ENCODE measurements at regions of chr1 and their contacts with region 1.

Region 1: GRCh38 chr1:66331657-66332547 is 202.1 kb upstream of the SGIP1 start:
- DNase-seq: peak; percentile 75
- H3K4me3 Mint-ChIP-seq: peak overlapping the region; percentile 93
- H3K27ac Mint-ChIP-seq: peak overlapping the region; percentile 96
- H3K4me1 Mint-ChIP-seq: peaks cover 48% of the 10 kb centered on the region
- H3K27me3 Mint-ChIP-seq: no peaks in the 10 kb centered on the region

Region 2: DNA sequence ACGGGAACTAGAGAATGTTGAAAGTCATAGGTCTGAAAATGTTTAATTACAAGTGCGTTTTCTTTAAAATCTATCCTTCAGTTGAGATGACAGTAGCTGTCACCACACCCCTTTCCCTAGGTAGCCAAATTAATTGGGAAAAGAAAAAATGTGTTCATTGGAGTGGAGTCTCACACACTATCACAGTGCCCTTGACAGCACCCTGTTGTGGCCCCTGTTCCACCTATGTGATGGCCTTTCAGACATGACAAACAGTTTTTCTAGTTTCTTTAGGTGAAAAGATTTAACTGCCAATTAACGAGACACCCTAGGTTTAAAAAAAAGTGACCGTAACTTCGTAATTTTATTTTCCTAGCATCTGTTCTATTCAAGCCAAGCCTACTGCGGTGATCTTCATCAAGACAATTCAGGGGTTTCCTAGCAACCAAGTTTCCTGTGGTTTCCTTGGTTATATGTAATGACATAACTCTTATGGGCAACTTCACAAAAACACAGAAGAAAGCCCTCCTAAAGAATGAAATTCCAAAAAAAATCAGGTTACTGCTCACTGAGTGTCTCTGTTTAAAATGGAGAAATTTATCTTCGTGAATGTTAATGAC is 240.9 kb before region 1 on chr1:
- CTCF ChIA-PET with region 1: no interaction called
- POLR2A ChIA-PET with region 1: no interaction called
- intact Hi-C with region 1: no loop called
- DNase-seq: no peak
- H3K4me3 Mint-ChIP-seq: no peak overlapping the region
- H3K27ac Mint-ChIP-seq: no peak overlapping the region
- H3K4me1 Mint-ChIP-seq: peaks cover 2% of the 10 kb centered on the region
- H3K27me3 Mint-ChIP-seq: no peaks in the 10 kb centered on the region

Region 3: DNA sequence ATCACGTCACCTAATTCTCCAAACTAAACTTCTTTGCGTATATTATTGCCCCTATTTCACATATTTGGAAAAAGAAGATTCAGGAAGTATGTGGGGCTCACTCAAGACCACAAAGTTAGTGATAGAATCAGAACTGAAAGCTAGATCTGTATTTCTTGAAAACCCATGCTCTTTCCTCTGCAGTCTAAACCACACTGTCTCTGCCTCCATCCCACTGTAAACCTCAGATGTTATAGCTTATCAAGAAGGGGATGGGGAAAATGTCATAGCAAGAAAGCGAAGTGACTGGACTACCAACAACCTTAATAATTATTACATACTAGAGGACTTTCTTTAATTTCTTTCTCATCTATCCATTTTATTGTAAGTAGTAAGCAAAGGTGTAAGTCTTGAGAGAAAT is 55.7 kb before region 1 on chr1:
- CTCF ChIA-PET with region 1: interaction called, 5 read pairs
- POLR2A ChIA-PET with region 1: interaction called, 28 read pairs
- intact Hi-C with region 1: no loop called
- DNase-seq: peak; percentile 44
- H3K4me3 Mint-ChIP-seq: peak overlapping the region; percentile 49
- H3K27ac Mint-ChIP-seq: peak overlapping the region; percentile 65
- H3K4me1 Mint-ChIP-seq: peaks cover 87% of the 10 kb centered on the region
- H3K27me3 Mint-ChIP-seq: no peaks in the 10 kb centered on the region

Region 4: GRCh38 chr1:66300972-66301451 is 30.9 kb before region 1 on chr1:
- CTCF ChIA-PET with region 1: interaction called, 12 read pairs
- POLR2A ChIA-PET with region 1: interaction called, 4 read pairs
- intact Hi-C with region 1: loop called (anchors 1 kb)
- DNase-seq: peak; percentile 60
- H3K4me3 Mint-ChIP-seq: peak overlapping the region; percentile 65
- H3K27ac Mint-ChIP-seq: peak overlapping the region; percentile 77
- H3K4me1 Mint-ChIP-seq: peaks cover 50% of the 10 kb centered on the region
- H3K27me3 Mint-ChIP-seq: no peaks in the 10 kb centered on the region

Region 5: DNA sequence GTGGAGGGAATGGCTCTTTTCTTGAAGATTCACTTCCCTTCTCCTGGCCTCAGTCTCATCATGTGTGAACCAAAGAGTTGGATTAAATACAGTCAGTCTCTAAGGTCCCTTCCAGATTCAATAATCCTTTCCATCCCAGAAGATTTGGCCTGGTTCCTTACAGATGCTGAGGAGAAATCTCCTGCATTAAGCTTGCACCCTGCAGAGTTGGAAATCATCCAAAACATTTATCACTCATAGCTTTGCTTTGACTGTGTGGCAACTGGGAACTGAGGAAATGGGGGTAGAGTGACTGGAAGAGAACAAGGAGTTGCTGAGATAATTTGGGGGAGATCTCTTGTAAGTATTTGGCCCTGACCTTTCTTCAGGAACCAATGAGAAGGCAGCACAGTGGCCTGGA is 18.5 kb before region 1 on chr1:
- CTCF ChIA-PET with region 1: no interaction called
- POLR2A ChIA-PET with region 1: no interaction called
- intact Hi-C with region 1: no loop called
- DNase-seq: no peak
- H3K4me3 Mint-ChIP-seq: no peak overlapping the region
- H3K27ac Mint-ChIP-seq: no peak overlapping the region
- H3K4me1 Mint-ChIP-seq: no peaks in the 10 kb centered on the region
- H3K27me3 Mint-ChIP-seq: no peaks in the 10 kb centered on the region

Region 6: DNA sequence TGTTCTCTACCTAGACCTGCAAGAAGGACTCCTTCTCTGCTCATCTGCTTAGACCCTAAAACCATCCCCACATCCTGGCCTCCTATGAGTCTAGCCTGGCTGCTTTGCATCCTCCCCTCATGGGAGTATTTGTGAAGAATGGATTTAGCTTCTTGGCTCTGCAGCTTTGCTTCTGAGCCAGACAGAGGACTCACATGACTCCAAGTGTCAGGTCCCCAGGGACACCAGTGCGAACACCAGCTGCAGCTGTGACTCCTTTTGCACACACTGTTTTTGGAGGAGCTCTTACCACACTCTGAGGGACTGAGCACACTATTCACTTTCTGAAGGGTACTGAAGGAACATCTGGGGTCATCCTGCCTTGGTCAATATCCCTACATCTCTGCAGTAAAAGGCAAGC is 70.3 kb after region 1 on chr1:
- CTCF ChIA-PET with region 1: no interaction called
- POLR2A ChIA-PET with region 1: no interaction called
- intact Hi-C with region 1: loop called (anchors 1 kb)
- DNase-seq: no peak
- H3K4me3 Mint-ChIP-seq: no peak overlapping the region
- H3K27ac Mint-ChIP-seq: no peak overlapping the region
- H3K4me1 Mint-ChIP-seq: peaks cover 31% of the 10 kb centered on the region
- H3K27me3 Mint-ChIP-seq: no peaks in the 10 kb centered on the region

Region 7: GRCh38 chr1:66598670-66599069 is 266.8 kb after region 1 on chr1:
- CTCF ChIA-PET with region 1: no interaction called
- POLR2A ChIA-PET with region 1: no interaction called
- intact Hi-C with region 1: no loop called
- DNase-seq: no peak
- H3K4me3 Mint-ChIP-seq: no peak overlapping the region
- H3K27ac Mint-ChIP-seq: no peak overlapping the region
- H3K4me1 Mint-ChIP-seq: peaks cover 4% of the 10 kb centered on the region
- H3K27me3 Mint-ChIP-seq: peaks cover 18% of the 10 kb centered on the region

Measured in activated CD4-positive, alpha-beta memory T cell treated with anti-CD3 and anti-CD28 coated beads for 36 hours (primary cell).